ENCODE measurements at regions of chr12 and their contacts with region 1.

Region 1: DNA sequence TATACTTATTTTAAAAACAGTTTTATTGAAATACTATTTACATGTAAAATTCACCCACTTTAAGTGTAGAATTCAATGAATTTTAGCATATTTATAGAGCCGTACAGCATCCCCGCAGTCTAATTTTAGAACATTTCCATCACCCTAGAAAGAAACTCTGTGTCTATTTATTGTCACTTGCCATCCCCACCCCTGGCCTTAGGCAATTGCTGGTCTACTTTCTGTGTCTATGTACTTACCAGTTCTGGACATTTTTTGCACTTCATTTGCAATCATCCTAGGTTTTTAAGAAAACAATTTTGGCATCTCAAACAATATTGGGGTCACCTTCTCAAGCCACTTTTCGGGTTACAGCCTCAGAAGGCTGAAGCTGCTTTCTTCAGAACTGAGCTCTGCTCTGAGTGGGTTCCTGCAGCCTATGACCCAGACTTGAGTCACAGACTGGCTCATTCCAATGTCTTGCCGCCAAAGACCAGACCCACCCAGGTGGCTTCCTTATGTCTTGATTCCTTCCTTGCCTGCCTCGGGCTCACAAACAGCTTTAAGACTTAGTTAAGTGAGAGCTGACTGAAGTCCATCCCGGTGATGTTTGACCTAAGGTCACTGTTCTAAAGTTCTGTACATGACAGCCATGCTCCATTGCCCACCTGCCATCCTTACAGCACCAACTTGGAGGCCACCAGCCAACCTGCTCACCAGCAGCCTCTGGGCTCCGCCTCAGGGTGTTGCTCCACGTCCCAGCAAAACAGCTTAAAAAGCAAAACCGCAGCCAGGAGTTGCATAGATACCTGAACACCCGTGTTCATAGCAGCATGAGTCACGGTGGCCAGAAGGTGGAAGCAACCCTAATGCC is 131.5 kb downstream of the CHST11 start:
- DNase-seq: peak; percentile 90 to 98
- H3K4me3 ChIP-seq: peak overlapping the region; percentile 41
- H3K27ac ChIP-seq: peak overlapping the region; percentile 91
- H3K4me1 ChIP-seq: peaks cover 71% of the 10 kb centered on the region
- H3K27me3 ChIP-seq: no peaks in the 10 kb centered on the region
- CTCF ChIP-seq: no peak

Region 2: GRCh38 chr12:104286538-104287482 is 301.5 kb before region 1 on chr12:
- CTCF ChIA-PET with region 1: no interaction called
- POLR2A ChIA-PET with region 1: no interaction called
- intact Hi-C with region 1: no loop called
- DNase-seq: peak; percentile 95 to 96
- H3K4me3 ChIP-seq: peak overlapping the region; percentile 96
- H3K27ac ChIP-seq: peak overlapping the region; percentile 99
- H3K4me1 ChIP-seq: peaks cover 43% of the 10 kb centered on the region
- H3K27me3 ChIP-seq: no peaks in the 10 kb centered on the region
- CTCF ChIP-seq: no peak

Region 3: GRCh38 chr12:104641862-104642261 is 53.6 kb after region 1 on chr12:
- CTCF ChIA-PET with region 1: no interaction called
- POLR2A ChIA-PET with region 1: no interaction called
- intact Hi-C with region 1: no loop called
- DNase-seq: no peak
- H3K4me3 ChIP-seq: no peak overlapping the region
- H3K27ac ChIP-seq: no peak overlapping the region
- H3K4me1 ChIP-seq: no peaks in the 10 kb centered on the region
- H3K27me3 ChIP-seq: no peaks in the 10 kb centered on the region
- CTCF ChIP-seq: no peak

Region 4: DNA sequence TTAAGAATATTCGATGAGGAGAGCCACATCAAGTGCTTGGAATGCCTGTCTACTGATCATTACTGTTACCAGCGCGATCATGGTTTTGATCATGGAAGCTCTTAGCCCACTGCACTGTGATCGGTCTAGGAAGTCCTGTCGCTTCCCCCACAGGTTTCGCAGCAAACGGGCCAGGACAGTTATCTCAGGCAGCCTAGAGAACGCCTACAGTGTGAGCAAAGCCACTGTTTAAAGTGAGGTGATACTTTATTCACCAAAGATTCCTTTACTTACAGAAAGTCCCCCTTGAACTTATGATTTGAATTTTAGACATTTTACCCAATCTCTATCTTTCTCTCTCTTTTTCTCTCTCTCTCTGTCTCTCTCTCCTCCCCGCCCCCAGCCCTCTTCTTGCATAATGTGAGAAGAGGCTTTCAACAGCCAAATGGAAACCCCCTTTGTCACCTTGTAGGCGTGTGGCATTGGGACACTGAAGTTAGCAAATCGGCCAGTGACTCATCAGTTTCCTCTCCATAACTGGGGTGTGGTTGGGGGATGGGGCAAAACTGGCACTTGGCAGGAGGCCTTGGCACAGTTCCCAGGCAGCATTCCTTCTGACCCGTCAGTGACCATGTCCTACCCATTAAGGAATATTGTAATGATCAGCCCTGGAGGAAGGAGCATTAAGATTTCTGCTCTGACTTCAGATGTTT is 83.3 kb after region 1 on chr12:
- CTCF ChIA-PET with region 1: no interaction called
- POLR2A ChIA-PET with region 1: no interaction called
- intact Hi-C with region 1: loop called (anchors 1 kb)
- DNase-seq: peak; percentile 97
- H3K4me3 ChIP-seq: peak overlapping the region; percentile 13; the same call in 1 of the 2 replicates
- H3K27ac ChIP-seq: peak overlapping the region; percentile 98
- H3K4me1 ChIP-seq: peaks cover 79% of the 10 kb centered on the region
- H3K27me3 ChIP-seq: no peaks in the 10 kb centered on the region
- CTCF ChIP-seq: no peak

Region 5: DNA sequence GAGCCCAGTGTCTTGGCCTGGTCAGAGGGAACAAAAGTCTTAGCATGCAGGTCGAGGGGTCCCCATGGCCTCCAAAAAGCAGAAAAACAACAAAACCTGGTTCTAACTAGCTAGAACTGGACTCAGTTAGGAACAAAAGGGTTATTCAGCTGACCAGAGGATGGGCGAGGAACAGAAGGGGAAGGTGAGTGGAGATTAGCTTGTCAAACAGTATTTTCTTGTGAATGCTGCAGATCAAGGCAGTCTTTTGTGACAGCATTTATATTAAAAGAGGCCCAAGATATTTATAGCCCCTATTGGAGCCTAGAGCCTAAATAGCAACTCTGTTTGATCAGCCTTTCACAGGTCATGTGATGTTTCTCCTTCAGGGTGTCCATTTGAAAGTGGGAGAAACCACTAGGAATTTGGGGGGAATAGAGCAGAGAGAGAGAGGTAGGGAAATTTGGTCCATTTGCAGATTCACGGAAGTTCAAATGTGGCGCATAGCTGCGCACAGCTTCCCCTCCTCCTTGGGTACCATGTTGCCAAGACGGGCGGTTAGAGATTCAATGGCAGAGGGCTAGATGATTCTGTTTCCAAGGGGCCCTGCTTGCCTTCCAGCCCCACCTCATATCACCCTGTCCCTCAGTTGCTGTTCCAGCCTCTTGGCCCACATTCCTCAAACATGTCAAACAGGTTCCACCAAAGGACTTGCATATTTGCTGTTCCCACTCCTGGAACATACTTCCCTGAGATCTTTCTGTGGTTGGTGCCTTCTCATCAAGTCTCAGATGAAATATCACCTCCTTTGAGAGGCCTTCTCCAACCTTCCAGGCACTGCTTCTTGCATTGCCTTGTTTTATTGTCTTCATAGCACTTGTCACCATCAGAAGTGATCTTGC is 89.2 kb after region 1 on chr12:
- CTCF ChIA-PET with region 1: no interaction called
- POLR2A ChIA-PET with region 1: interaction called, 10 read pairs
- intact Hi-C with region 1: no loop called
- DNase-seq: peak; percentile 77 to 96
- H3K4me3 ChIP-seq: 0 out of 2 replicates have a peak overlapping the region, but pooled peaks have one; percentile 18
- H3K27ac ChIP-seq: peak overlapping the region; percentile 87
- H3K4me1 ChIP-seq: peaks cover 68% of the 10 kb centered on the region
- H3K27me3 ChIP-seq: no peaks in the 10 kb centered on the region
- CTCF ChIP-seq: no peak

Region 6: DNA sequence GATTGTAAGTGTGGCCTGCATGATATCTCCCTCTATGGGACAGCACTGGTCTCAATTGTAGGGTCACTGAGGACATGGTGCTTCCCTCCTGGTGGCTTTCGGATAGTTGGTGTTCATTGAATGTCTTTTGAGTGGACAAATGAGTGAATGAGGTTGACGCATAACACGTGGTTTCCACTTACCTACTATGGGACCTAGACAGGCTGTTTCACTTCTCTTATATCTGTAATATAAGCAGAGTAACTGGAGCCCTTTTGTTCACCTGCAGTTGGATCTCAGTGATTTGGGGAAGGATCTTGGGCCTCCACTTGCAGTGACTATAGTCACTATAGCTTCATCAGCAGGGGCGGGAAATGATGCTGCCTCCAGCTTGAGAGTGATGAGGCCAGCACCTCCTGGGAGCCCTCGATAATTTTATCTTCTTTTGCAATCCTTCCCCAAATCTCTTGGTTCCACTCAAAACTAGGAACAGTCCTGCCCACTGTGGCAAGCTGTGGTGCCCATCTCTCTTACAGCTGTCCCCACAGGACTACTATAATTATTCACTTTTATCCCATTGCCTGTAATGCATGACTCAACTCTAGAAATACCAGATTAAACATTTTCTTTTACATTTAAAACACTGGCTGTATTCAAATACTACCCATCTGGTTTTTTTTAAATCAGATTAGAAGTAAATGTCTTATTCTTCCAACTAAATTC is 111.3 kb after region 1 on chr12:
- CTCF ChIA-PET with region 1: no interaction called
- POLR2A ChIA-PET with region 1: no interaction called
- intact Hi-C with region 1: no loop called
- DNase-seq: no peak
- H3K4me3 ChIP-seq: no peak overlapping the region
- H3K27ac ChIP-seq: no peak overlapping the region
- H3K4me1 ChIP-seq: no peaks in the 10 kb centered on the region
- H3K27me3 ChIP-seq: no peaks in the 10 kb centered on the region
- CTCF ChIP-seq: no peak

Region 7: GRCh38 chr12:104750061-104750460 is 161.8 kb after region 1 on chr12:
- CTCF ChIA-PET with region 1: no interaction called
- POLR2A ChIA-PET with region 1: no interaction called
- intact Hi-C with region 1: loop called (anchors 5 kb)
- DNase-seq: peak; percentile 44 to 84
- H3K4me3 ChIP-seq: no peak overlapping the region
- H3K27ac ChIP-seq: peak overlapping the region; percentile 76
- H3K4me1 ChIP-seq: peaks cover 22% of the 10 kb centered on the region
- H3K27me3 ChIP-seq: no peaks in the 10 kb centered on the region
- CTCF ChIP-seq: no peak